HEK293T (cell line): ENCODE measurements at regions of chr16 and their contacts with region 1.

Region 1: GRCh38 chr16:679814-680622 is at the start of gene STUB1:
- DNase-seq: peak; percentile 80

Region 2: DNA sequence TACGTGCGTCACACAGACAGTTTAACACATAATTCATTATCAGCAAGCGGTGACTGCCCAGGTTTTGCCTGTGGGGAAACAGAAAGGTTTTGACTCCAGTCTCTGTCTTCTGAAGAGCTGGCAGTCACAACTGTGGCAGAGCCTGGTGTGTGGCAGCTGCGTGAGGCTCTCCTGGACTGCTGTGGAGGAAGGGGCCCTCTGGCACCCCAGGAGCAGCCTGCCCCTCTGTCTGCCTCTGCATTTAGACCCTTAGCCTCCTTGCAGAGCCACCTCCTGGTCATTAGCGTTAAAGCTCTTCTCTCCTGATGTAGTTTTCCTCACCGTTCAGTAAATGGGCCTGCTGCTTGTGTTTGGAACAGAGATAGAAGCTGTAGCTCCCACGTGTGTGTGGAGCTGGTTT is 79.2 kb before region 1 on chr16:
- CTCF ChIA-PET with region 1: no interaction called
- POLR2A ChIA-PET with region 1: no interaction called
- DNase-seq: no peak

Region 3: GRCh38 chr16:648781-649589 is 31.0 kb before region 1 on chr16 and contains the start of gene WDR90:
- CTCF ChIA-PET with region 1: interaction called, 4 read pairs
- POLR2A ChIA-PET with region 1: interaction called, 11 read pairs
- DNase-seq: peak; percentile 92

Region 4: GRCh38 chr16:667780-668518 is 12.1 kb before region 1 on chr16 and contains the start of gene RHOT2:
- CTCF ChIA-PET with region 1: interaction called, 9 read pairs
- POLR2A ChIA-PET with region 1: interaction called, 13 read pairs
- DNase-seq: peak; percentile 90

Region 5: GRCh38 chr16:720990-721764 is 41.2 kb after region 1 on chr16 and contains the start of gene ANTKMT:
- CTCF ChIA-PET with region 1: no interaction called
- POLR2A ChIA-PET with region 1: interaction called, 11 read pairs
- DNase-seq: peak; percentile 89